Esophagus muscularis mucosa (tissue), 4 donors: ENCODE measurements at regions of chr22 and their contacts with region 1.

Region 1: DNA sequence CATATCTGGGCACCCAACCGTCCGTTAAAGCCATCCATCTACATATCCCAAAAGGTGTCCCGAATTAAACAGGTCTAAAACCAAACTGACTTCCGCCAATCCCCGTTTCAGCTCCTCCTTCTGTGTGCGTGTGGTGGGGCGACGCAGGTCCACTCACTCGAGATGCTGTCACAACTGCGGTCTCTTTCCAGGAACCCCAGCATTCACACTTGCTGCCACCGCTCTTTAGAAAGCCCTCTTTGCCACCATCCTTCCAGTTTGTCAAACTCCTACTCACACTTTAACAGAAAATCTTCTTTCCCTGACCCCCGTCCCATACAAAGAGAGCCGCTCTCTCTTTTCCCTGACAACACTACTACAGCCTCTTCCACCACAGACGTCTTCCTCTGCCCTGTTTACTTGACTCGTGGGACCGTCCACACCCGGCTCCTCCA is 467 bp downstream of the ESS2 start:
- DNase-seq: no peak
- H3K4me3 ChIP-seq: peak overlapping the region; percentile 77 to 89 (median 80)
- H3K27ac ChIP-seq: peak overlapping the region; percentile 78 to 86 (median 86)
- H3K4me1 ChIP-seq: peaks cover 8 to 23% (median 19%) of the 10 kb centered on the region in 4 donors
- H3K27me3 ChIP-seq: peaks cover 0 to 14% (median 3%) of the 10 kb centered on the region in 4 donors
- CTCF ChIP-seq: no peak
- EP300 ChIP-seq: no peak
- POLR2A ChIP-seq: no peak

Region 2: GRCh38 chr22:19122143-19122751 is 21.7 kb before region 1 on chr22 and contains the start of gene DGCR2:
- intact Hi-C with region 1: loop called (anchors 2 kb)
- DNase-seq: peak; percentile 99
- H3K4me3 ChIP-seq: peak within 1 kb of the TSS; percentile 80 to 98 (median 94)
- H3K27ac ChIP-seq: peak within 1 kb of the TSS; percentile 91 to 97 (median 96)
- H3K4me1 ChIP-seq: peaks cover 45 to 53% (median 49%) of the 10 kb centered on the region in 4 donors
- H3K27me3 ChIP-seq: no peaks in the 10 kb centered on the region
- CTCF ChIP-seq: no peak
- EP300 ChIP-seq: no peak
- POLR2A ChIP-seq: peak; percentile 32
- total RNA-seq, gene DGCR2: 45.7 to 79.6 (median 65.4) TPM

Region 3: DNA sequence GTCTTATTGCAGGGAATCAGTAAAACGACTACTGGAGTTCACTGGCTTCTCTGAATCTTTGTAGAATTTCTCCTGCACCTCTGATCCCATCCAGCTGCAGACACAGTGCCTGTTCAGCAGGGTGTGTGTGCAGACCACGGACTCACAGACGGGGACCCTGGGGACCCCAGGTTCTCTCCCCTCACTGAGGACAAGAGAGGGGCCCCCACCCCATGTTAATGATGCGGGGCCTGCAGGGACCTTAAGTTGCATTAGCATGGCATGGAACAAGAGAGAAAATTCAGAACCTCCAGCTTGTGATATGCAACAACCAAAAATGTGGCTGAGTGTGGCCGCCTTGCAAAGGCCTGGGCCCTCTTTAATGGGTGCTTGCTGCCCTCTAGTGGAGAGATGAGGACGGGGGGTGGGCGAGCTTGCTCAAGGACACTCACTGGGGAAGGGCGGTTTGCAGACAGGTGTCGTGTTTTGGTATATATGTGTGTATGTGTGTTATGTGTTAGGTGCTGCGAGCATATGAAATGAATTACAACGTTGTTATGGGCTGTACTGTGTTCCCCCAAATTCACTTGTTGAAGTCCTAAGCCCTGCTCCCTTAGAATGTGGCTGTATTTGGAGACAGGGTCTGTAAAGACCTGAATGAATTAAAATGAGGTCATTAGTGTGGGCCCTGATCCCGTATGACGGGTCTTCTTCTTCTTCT is 485.9 kb after region 1 on chr22:
- intact Hi-C with region 1: loop called (anchors 5 kb)
- DNase-seq: no peak
- H3K4me3 ChIP-seq: no peak overlapping the region
- H3K27ac ChIP-seq: no peak overlapping the region
- H3K4me1 ChIP-seq: no peaks in the 10 kb centered on the region
- H3K27me3 ChIP-seq: peaks cover 0 to 56% (median 1%) of the 10 kb centered on the region in 4 donors
- CTCF ChIP-seq: peak; percentile 85 to 88 (median 87)
- EP300 ChIP-seq: no peak
- POLR2A ChIP-seq: no peak